Activated CD4-positive, alpha-beta T cell treated with anti-CD3 and anti-CD28 coated beads, Interleukin-2, amount 10 ng/mL, durations not matched to agents 24 days and 14 days (primary cell): ENCODE measurements at regions of chr19 and their contacts with region 1.

Region 1: DNA sequence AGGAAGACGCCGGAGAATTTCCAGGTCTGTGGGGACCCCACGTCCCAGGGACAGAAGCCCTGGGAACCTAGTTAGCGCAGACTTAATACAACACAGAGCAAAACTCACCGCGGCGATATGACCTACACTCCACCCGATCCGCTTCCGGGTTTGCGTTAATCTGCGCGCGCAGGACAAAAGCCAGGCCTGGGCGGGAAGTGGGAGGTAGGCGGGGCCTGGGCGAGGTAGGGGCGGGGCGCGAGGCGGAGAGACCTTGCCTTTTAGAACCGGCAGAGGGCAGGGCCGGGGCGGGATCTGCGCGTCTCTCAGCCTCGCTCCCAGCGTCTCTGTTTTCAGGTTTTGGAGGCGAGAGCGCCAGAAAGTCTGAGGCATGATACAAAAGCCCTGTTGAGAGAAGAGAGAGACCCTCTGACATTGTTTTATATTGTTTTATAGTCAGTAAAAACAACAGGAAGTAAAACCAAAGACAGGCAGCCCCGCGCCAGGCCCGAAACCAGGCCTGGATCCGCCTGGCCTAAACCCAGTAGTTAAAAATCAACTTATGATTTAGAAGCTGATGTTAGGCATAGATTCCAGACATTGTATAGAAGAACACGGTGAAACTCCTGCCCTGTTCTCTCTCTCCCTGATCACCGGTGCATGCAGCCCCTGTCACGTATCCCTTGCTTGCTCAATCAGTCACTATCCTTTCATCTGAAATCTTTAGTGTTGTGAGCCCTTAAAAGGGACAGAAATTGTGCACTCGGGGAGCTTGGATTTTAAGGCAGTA is at the start of gene ZNF611:
- DNase-seq: peak; percentile 100
- H3K4me3 Mint-ChIP-seq: peak within 1 kb of the TSS; percentile 92
- H3K27ac Mint-ChIP-seq: peak within 1 kb of the TSS; percentile 88
- H3K4me1 Mint-ChIP-seq: peaks cover 19% of the 10 kb centered on the region
- H3K27me3 Mint-ChIP-seq: no peaks in the 10 kb centered on the region
- total RNA-seq, gene ZNF611: 15.9 and 18.2 TPM in 2 replicates

Region 2: DNA sequence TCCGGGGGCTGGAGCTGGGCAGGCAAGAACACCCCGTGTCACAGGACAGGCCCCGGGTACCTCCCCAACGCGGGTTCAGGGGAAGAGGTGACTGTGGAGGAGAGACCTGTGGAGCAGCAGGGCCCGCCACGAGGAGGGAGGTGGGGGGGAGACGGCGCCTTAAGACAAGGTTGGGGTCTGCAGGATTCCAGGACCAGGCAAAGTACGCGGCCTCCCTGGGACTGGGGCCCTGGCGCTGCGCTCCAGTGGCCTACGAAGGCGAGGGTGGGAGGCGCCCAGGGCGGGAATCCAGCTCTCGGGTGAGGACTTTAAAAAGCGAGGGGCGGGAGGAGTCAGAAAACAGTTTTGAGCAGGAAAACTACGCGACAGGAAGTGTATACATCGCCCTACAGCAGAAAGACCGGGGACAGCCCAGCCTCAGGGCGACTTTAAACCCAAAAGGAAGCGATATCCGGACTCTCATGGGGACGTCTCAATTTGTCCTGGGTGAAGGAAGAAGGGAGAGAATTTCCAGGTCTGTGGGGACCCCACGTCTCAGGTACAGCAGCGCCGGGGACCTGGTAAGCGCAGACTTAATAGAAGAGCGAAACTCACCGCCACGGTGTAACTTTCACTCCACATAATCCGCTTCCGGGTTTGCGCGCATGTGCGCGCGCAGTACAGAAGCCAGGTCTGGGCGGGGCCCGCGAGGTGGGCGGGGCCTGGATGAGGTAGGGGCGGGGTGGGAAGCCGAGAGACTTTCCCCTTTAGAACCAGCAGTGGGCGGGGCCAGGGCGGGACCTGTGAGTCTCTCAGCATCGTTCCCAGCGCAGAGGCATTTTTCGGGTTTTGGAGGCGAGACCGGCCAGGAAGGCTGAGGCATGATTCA is 97.1 kb before region 1 on chr19 and contains the start of gene ZNF83:
- intact Hi-C with region 1: loop called (anchors 1 kb)
- DNase-seq: peak; percentile 98
- H3K4me3 Mint-ChIP-seq: peak within 1 kb of the TSS; percentile 97
- H3K27ac Mint-ChIP-seq: peak within 1 kb of the TSS; percentile 98
- H3K4me1 Mint-ChIP-seq: peaks cover 11% of the 10 kb centered on the region
- H3K27me3 Mint-ChIP-seq: no peaks in the 10 kb centered on the region
- total RNA-seq, gene ZNF83: 22.1 and 26.3 TPM in 2 replicates

Region 3: DNA sequence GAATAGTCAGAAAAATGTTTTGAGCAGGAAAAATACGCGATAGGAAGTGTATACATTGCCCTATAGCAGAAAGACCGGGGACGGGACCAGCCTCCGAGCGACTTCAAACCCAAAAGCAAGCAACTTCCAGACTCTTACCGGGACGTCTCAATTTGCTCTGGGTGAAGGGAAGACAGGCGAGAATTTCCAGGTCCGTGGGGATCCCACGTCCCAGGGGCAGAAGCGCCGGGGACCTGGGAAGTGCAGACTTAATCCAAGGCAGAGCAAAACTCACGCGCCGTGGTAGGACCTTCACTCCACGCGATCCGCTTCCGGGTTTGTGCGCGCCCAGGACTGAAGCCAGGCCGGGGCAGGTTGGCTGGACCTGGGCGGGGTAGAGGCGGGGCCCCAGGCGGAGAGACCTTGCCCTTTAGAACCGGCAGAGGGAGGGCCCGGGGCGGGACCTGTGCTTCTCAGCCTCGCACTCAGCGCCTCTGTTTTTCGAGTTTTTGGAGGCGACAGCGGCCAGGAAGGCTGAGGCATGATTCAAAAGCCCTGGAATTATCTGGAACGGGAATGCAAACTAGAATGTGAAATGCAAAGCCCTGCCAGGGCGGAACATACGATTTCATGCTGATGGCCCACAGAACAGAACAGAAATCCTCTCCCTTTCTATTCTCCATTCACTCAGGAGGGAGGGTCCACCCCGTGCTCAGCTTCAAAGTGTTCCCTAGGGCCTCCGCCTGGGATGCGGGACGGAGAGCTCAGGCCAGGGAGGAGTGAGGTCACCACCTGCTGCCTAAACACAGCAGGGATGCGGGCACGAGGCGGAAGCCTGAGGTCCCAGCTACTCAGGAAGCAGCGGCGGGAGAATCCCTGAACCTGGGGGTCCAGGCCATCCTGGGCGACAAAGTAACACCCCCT is 51.6 kb after region 1 on chr19 and contains the start of gene ZNF600:
- intact Hi-C with region 1: loop called (anchors 5 kb)
- DNase-seq: peak; percentile 90
- H3K4me3 Mint-ChIP-seq: peak within 1 kb of the TSS; percentile 92
- H3K27ac Mint-ChIP-seq: peak within 1 kb of the TSS; percentile 79
- H3K4me1 Mint-ChIP-seq: peaks cover 26% of the 10 kb centered on the region
- H3K27me3 Mint-ChIP-seq: no peaks in the 10 kb centered on the region
- total RNA-seq, gene ZNF600: 10.6 and 10.7 TPM in 2 replicates

Region 4: DNA sequence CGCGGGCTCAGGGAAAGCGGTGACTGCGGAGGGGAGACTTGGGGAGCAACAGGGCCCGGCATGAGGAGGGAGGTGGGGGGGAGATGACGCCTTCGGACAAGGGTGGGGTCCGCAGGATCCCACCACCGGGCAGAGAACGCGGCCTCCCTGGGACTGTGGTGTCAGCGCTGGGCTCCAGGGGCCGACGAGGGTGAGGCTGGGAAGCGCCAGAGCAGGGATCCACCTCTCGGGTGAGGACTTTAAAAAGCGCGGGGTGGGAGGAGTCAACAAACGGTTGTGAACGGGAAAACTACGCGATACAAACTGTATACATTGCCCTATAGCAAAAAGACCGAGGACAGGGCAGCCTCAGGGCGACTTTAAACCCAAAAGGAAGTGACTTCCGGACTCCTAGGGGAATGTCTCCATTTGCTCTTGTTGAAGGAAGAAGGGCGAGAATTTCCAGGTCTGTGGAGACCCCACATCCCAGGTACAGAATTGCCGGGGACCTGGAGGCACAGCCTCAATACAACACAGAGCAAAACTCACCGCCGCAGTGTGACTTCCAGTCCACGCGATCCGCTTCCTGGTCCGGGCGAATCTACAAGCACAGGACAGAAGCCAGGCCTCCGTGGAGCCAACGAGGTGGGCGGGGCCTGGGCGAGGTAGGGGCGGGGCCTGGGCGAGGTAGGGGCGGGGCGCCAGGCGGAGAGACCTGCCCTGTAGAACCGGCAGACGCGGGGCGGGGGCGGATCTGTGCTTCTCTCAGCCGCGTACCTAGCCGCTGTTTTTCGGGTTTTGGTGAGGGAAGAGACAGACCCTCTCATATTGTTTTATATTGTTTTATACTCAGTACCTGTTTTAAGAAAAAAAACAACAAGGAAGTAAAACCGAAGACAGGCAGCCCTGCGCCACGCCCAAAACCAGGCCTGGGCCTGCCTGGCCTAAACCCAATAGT is 188.0 kb after region 1 on chr19 and contains the start of gene ZNF888:
- intact Hi-C with region 1: loop called (anchors 2 kb)
- DNase-seq: peak; percentile 95
- H3K4me3 Mint-ChIP-seq: peak within 1 kb of the TSS; percentile 89
- H3K27ac Mint-ChIP-seq: peak within 1 kb of the TSS; percentile 96
- H3K4me1 Mint-ChIP-seq: peaks cover 19% of the 10 kb centered on the region
- H3K27me3 Mint-ChIP-seq: no peaks in the 10 kb centered on the region
- total RNA-seq, gene ZNF888: 4.4 and 6.5 TPM in 2 replicates

Region 5: GRCh38 chr19:52962394-52963246 is 227.5 kb after region 1 on chr19 and contains the start of gene ZNF816:
- intact Hi-C with region 1: loop called (anchors 10 kb)
- DNase-seq: peak; percentile 100
- H3K4me3 Mint-ChIP-seq: peak within 1 kb of the TSS; percentile 97
- H3K27ac Mint-ChIP-seq: peak within 1 kb of the TSS; percentile 95
- H3K4me1 Mint-ChIP-seq: peaks cover 15% of the 10 kb centered on the region
- H3K27me3 Mint-ChIP-seq: no peaks in the 10 kb centered on the region
- total RNA-seq, gene ZNF816: 8.9 TPM in 2 replicates

Region 6: DNA sequence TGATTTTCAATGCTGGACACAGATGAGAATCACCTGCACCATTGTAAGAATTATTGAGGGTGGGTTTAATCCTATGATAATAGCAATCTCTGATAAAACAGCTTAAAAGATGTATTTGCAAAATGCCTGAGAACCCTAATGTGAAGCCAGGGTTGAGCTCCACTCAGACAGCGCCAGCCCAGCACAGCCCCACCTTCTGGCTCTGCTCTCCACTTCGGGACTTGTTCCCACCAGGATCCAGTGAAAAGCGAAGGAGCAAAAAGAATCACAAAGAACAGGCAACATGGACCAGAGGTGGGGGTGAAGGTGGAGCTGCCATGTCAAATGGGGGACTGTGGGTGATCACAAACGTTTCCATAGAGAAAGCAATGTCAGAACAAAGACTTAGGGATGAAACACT is 246.3 kb after region 1 on chr19:
- intact Hi-C with region 1: no loop called
- DNase-seq: no peak
- H3K4me3 Mint-ChIP-seq: no peak overlapping the region
- H3K27ac Mint-ChIP-seq: no peak overlapping the region
- H3K4me1 Mint-ChIP-seq: no peaks in the 10 kb centered on the region
- H3K27me3 Mint-ChIP-seq: no peaks in the 10 kb centered on the region

Region 7: GRCh38 chr19:53333463-53334449 is 598.7 kb after region 1 on chr19 and contains the start of gene ZNF845:
- intact Hi-C with region 1: loop called (anchors 1 kb)
- DNase-seq: peak; percentile 99
- H3K4me3 Mint-ChIP-seq: peak within 1 kb of the TSS; percentile 89
- H3K27ac Mint-ChIP-seq: peak within 1 kb of the TSS; percentile 88
- H3K4me1 Mint-ChIP-seq: peaks cover 11% of the 10 kb centered on the region
- H3K27me3 Mint-ChIP-seq: no peaks in the 10 kb centered on the region
- total RNA-seq, gene ZNF845: 6.1 and 6.4 TPM in 2 replicates